ENCODE measurements at regions of chr5 and their contacts with region 1.

Region 1: GRCh38 chr5:109688971-109689739 is 572 bp upstream of the MAN2A1 start:
- DNase-seq: peak; percentile 92
- H3K4me3 ChIP-seq: peak overlapping the region; percentile 79 to 87 (median 83)
- H3K27ac ChIP-seq: peak overlapping the region; percentile 81
- H3K4me1 ChIP-seq: peaks cover 8% of the 10 kb centered on the region
- H3K27me3 ChIP-seq: no peaks in the 10 kb centered on the region
- CTCF ChIP-seq: no peak
- POLR2A ChIP-seq: peak; percentile 82

Region 2: DNA sequence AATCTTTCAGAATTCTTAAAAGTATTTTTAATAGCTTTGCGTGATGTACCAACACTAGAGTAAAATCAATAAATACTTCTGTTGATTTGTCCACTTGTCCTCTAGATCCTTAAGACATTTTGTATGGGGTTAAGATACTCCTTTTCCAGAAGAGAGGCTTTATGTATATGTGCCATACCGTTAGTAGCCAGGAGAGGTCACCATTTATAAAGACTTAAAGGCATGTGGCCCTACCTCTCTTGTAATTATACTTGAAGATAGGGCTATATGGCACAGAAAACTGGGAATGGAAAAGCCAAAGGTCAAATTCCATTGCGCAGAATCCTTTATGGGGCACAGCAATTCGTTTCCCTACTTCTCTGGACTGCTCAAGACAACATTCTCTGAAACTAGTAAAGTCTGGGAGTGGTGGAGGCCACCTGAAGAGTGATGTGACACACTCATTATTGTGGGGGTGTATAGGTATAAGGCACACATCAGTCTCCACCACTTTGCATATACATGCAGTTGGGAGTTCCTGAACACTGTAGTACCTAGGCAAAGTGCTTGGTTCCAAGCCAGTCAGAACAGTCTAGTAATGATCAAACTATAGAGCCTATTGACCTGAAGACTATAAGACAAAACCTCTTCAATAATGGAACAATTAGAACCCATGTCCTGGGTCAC is 1167.2 kb before region 1 on chr5:
- CTCF ChIA-PET with region 1: interaction called, 6 read pairs
- POLR2A ChIA-PET with region 1: no interaction called
- dilution Hi-C with region 1: no loop called
- intact Hi-C with region 1: loop called (anchors 1 kb)
- DNase-seq: peak; percentile 71
- H3K4me3 ChIP-seq: no peak overlapping the region
- H3K27ac ChIP-seq: no peak overlapping the region
- H3K4me1 ChIP-seq: no peaks in the 10 kb centered on the region
- H3K27me3 ChIP-seq: no peaks in the 10 kb centered on the region
- CTCF ChIP-seq: peak; percentile 50 to 54
- POLR2A ChIP-seq: no peak

Region 3: DNA sequence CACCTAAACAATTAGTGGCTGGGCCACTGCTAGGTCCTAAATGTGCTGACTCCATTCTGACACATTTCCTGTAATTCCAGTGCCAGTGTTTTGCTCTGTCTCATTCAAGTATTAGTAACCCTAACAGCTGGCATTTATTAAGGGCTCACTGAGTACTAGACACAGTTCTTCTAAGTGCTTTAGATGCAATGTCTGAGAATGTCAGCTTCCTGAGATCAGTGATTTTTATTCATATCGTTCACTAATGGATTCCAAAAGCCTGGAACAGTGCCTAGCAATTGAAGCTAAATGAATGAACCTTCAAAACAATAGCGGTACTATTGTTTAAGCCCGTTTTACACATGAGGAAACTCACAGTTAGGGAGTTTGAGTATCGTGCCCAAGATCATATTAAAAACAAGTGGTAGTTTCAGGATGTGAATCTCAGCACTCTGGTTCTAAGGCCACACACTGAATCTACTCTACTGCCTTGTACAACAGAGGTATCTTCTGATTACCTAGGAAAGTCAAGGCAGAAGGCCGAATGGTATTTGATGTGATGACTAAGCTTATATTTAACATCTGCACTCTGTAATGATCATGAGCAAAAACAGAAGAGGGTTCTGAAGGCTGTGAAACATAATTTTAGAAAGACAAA is 583.4 kb before region 1 on chr5:
- CTCF ChIA-PET with region 1: interaction called, 3 read pairs
- POLR2A ChIA-PET with region 1: no interaction called
- dilution Hi-C with region 1: no loop called
- intact Hi-C with region 1: loop called (anchors 10 kb)
- DNase-seq: peak; percentile 97
- H3K4me3 ChIP-seq: peak overlapping the region in 1 of 3 experiments; percentile 16
- H3K27ac ChIP-seq: peak overlapping the region; percentile 89
- H3K4me1 ChIP-seq: peaks cover 21% of the 10 kb centered on the region
- H3K27me3 ChIP-seq: no peaks in the 10 kb centered on the region
- CTCF ChIP-seq: no peak
- POLR2A ChIP-seq: no peak

Region 4: DNA sequence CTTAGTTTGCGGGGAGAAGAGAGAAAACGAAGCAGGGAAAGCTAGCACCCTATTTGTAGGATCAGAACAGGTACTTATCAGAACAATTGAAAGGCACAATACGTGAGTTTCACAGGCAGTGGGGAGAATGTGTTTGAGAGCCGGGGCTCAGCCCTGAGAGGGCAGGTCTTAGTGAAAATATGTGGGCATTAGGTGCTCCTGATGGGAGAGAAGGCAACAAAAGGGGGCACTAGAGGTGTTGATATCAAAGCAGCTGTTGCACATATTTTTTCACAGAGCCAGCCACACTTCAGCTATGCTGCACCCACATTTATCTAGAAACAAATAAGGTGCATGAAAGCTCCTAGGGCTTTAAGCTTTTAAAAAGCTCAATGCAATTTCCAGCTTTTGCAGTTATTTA is 99.2 kb before region 1 on chr5:
- CTCF ChIA-PET with region 1: interaction called, 3 read pairs
- POLR2A ChIA-PET with region 1: no interaction called
- dilution Hi-C with region 1: no loop called
- intact Hi-C with region 1: loop called (anchors 2 kb)
- DNase-seq: peak; percentile 2
- H3K4me3 ChIP-seq: no peak overlapping the region
- H3K27ac ChIP-seq: no peak overlapping the region
- H3K4me1 ChIP-seq: no peaks in the 10 kb centered on the region
- H3K27me3 ChIP-seq: no peaks in the 10 kb centered on the region
- CTCF ChIP-seq: no peak
- POLR2A ChIP-seq: no peak

Region 5: DNA sequence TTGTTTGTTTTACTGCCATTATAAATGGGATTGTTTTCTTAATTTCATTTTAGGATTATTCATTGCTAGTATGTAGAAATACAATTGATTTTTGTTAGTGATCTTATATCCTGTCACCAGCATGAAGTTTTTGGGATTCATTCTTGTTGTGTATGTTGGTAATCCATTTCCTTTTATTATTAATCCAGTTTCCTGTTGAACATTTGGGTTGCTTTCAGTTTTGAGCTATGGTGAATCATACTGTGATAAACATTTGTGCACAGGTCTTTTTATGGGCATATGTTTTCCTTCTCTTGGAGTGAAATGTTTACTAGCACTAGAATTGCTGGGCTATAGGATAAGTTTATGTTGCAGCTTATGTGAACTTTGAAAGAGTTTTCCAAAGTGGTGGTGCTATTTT is 70.2 kb after region 1 on chr5:
- CTCF ChIA-PET with region 1: interaction called, 7 read pairs
- POLR2A ChIA-PET with region 1: no interaction called
- dilution Hi-C with region 1: no loop called
- intact Hi-C with region 1: loop called (anchors 2 kb)
- DNase-seq: peak; percentile 89
- H3K4me3 ChIP-seq: peak overlapping the region in 1 of 3 experiments; percentile 32
- H3K27ac ChIP-seq: peak overlapping the region; percentile 67
- H3K4me1 ChIP-seq: peaks cover 10% of the 10 kb centered on the region
- H3K27me3 ChIP-seq: no peaks in the 10 kb centered on the region
- CTCF ChIP-seq: no peak
- POLR2A ChIP-seq: no peak

Region 6: DNA sequence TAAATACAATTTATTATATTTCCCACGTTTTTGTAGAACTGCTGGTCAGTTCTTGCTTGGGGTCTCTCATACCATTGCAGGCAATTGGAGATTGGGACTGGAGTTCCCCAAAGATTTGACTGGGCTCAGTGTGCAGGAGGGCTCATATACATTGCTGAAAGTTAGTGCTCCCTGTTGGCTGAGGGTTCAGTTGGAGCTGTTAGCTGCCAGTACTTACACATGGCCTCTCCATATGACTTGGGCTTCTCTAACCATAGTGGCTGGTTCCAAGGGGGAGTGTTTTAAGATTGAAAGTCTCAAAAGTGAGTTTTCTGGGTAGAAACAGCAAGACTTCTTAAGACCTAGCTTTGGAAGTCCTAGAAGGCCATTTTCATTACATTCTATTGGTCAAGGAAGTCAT is 103.5 kb after region 1 on chr5:
- CTCF ChIA-PET with region 1: no interaction called
- POLR2A ChIA-PET with region 1: no interaction called
- dilution Hi-C with region 1: no loop called
- intact Hi-C with region 1: no loop called
- DNase-seq: no peak
- H3K4me3 ChIP-seq: no peak overlapping the region
- H3K27ac ChIP-seq: no peak overlapping the region
- H3K4me1 ChIP-seq: no peaks in the 10 kb centered on the region
- H3K27me3 ChIP-seq: no peaks in the 10 kb centered on the region
- CTCF ChIP-seq: no peak
- POLR2A ChIP-seq: no peak

Region 7: DNA sequence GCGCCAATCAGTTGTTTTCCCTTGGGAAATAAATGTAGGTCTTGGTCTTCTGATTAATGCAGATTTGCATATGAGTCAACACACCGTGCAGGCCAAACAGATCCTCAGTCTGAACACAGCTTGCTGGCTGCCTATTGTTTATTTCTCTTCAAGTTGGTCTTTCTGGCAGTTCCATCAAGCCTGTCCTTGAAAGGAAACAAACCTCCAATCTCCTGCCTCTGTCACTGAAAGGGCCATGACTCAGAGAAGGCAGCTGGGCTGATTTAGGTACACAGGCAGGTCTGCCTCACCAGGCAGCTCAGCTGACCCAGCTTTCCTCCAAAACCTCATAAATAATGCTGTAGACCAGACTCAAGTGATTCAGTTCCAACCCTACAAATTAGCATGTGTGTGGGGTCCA is 176.5 kb after region 1 on chr5:
- CTCF ChIA-PET with region 1: interaction called, 16 read pairs
- POLR2A ChIA-PET with region 1: interaction called, 3 read pairs
- dilution Hi-C with region 1: no loop called
- intact Hi-C with region 1: loop called (anchors 1 kb)
- DNase-seq: peak; percentile 96
- H3K4me3 ChIP-seq: no peak overlapping the region
- H3K27ac ChIP-seq: peak overlapping the region; percentile 79
- H3K4me1 ChIP-seq: peaks cover 29% of the 10 kb centered on the region
- H3K27me3 ChIP-seq: no peaks in the 10 kb centered on the region
- CTCF ChIP-seq: no peak
- POLR2A ChIP-seq: peak; percentile 38